ENCODE measurements at regions of chr7 and their contacts with region 1.

Region 1: GRCh38 chr7:151351027-151351426 is 9.4 kb downstream of the NUB1 start:
- DNase-seq: peak in 2 of 9 donors; percentile 7 to 45
- ATAC-seq: no peak
- H3K4me3 ChIP-seq: no peak overlapping the region
- H3K4me3 Mint-ChIP-seq: peak overlapping the region; percentile 56 to 86 (median 72)
- H3K27ac ChIP-seq: peak overlapping the region; percentile 89
- H3K27ac Mint-ChIP-seq: peak overlapping the region; percentile 74 to 100 (median 93)
- H3K4me1 ChIP-seq: peaks cover 28 to 35% of the 10 kb centered on the region in 2 donors
- H3K4me1 Mint-ChIP-seq: peaks cover 19 to 74% (median 69%) of the 10 kb centered on the region in 7 donors
- H3K27me3 ChIP-seq: no peaks in the 10 kb centered on the region
- H3K27me3 Mint-ChIP-seq: no peaks in the 10 kb centered on the region

Region 2: GRCh38 chr7:149714050-149714909 is 1636.7 kb before region 1 on chr7:
- CTCF ChIA-PET with region 1: no interaction called
- POLR2A ChIA-PET with region 1: no interaction called
- intact Hi-C with region 1: loop called in 1 of 2 experiments (anchors 10 kb)
- DNase-seq: peak; percentile 68 to 89 (median 84)
- ATAC-seq: peak; percentile 99
- H3K4me3 ChIP-seq: peak overlapping the region; percentile 75
- H3K4me3 Mint-ChIP-seq: peak overlapping the region; percentile 71 to 87 (median 80)
- H3K27ac ChIP-seq: peak overlapping the region; percentile 72
- H3K27ac Mint-ChIP-seq: peak overlapping the region in 4 of 9 donors; percentile 5 to 72 (median 54)
- H3K4me1 ChIP-seq: peaks cover 10 to 13% of the 10 kb centered on the region in 2 donors
- H3K4me1 Mint-ChIP-seq: peaks cover 12 to 26% (median 19%) of the 10 kb centered on the region in 7 donors
- H3K27me3 ChIP-seq: no peaks in the 10 kb centered on the region
- H3K27me3 Mint-ChIP-seq: peaks cover 0 to 4% (median 0%) of the 10 kb centered on the region in 5 donors

Region 3: DNA sequence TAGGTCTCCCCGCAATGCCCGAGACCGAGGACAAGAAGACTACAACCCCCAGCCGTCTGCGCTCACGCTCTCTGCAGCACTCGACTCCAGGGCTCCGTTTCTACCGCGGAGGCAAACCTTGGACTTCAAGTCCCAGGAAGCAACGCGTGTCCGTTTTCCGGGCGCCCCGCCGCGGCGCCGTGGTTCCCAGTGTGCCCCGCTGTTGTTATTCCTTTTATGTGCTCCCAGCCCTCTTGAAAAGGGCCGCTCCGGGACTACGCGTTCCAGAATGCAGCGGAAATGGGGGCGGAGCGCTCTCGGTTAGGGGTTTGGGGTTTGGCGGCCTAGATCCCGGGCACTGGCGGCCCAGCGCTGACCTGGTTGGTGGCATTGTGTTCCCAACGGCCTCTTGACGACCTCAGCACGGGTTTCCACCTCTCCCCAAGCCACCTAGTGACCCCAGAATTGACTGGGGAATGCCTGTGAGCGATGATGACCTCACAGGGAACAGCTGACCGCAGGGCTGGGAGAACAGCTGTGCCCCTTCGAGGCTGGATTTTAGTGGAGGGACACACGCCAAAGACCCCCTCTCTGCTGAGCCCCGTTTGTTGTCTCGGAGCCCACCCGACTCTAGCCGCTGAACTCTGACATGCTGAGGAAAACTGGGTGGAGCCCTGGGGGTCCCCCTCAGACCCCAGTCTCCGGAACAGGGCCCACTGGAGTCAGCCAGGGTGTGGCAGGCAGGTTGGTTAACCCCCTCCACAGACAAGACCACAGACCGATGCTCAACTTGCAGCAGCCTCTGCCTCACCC is 292.8 kb before region 1 on chr7:
- CTCF ChIA-PET with region 1: no interaction called
- POLR2A ChIA-PET with region 1: no interaction called
- intact Hi-C with region 1: loop called in 1 of 2 experiments (anchors 5 kb)
- DNase-seq: peak; percentile 80 to 99 (median 97)
- ATAC-seq: peak; percentile 96
- H3K4me3 ChIP-seq: peak overlapping the region; percentile 78
- H3K4me3 Mint-ChIP-seq: peak overlapping the region; percentile 91 to 99 (median 94)
- H3K27ac ChIP-seq: peak overlapping the region; percentile 92
- H3K27ac Mint-ChIP-seq: peak overlapping the region; percentile 86 to 96 (median 93)
- H3K4me1 ChIP-seq: peaks cover 25 to 32% of the 10 kb centered on the region in 2 donors
- H3K4me1 Mint-ChIP-seq: peaks cover 25 to 41% (median 38%) of the 10 kb centered on the region in 7 donors
- H3K27me3 ChIP-seq: no peaks in the 10 kb centered on the region
- H3K27me3 Mint-ChIP-seq: no peaks in the 10 kb centered on the region

Region 4: GRCh38 chr7:151276666-151277590 is 74.1 kb before region 1 on chr7:
- CTCF ChIA-PET with region 1: no interaction called
- POLR2A ChIA-PET with region 1: no interaction called
- intact Hi-C with region 1: loop called in 1 of 2 experiments (anchors 2 kb)
- DNase-seq: peak; percentile 32 to 64 (median 55)
- ATAC-seq: peak; percentile 77
- H3K4me3 ChIP-seq: peak overlapping the region; percentile 53
- H3K4me3 Mint-ChIP-seq: peak overlapping the region; percentile 69 to 88 (median 85)
- H3K27ac ChIP-seq: peak overlapping the region; percentile 0
- H3K27ac Mint-ChIP-seq: peak overlapping the region in 8 of 9 donors; percentile 38 to 90 (median 62)
- H3K4me1 ChIP-seq: peaks cover 13 to 20% of the 10 kb centered on the region in 2 donors
- H3K4me1 Mint-ChIP-seq: peaks cover 23 to 39% (median 32%) of the 10 kb centered on the region in 7 donors
- H3K27me3 ChIP-seq: no peaks in the 10 kb centered on the region
- H3K27me3 Mint-ChIP-seq: peaks cover 0 to 32% (median 8%) of the 10 kb centered on the region in 5 donors

Region 5: DNA sequence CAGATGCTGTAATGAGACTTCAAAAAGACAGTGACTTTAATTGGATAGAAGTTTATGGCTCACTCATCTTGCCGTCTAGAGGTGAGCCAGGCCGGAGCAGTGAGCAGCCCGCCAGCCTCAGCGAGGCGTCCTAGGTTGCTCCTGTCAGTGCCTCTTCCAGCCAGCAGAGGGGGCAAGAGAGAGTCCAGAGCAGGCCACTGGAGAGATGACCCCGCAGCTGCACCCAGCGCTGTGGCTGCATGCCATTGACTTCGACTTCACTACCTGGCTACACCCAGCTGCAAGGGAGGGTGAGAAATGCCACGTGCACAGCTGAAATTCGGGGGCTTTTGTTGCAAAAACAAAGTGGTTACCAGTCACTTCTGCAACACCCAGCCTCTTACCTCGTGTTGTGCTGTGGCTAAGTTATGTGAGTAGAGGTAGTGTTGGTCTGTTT is 17.1 kb after region 1 on chr7:
- CTCF ChIA-PET with region 1: interaction called, 3 read pairs
- POLR2A ChIA-PET with region 1: interaction called, 5 read pairs
- intact Hi-C with region 1: loop called in 1 of 2 experiments (anchors 2 kb)
- DNase-seq: peak; percentile 55 to 80 (median 69)
- ATAC-seq: peak; percentile 99
- H3K4me3 ChIP-seq: no peak overlapping the region
- H3K4me3 Mint-ChIP-seq: no peak overlapping the region
- H3K27ac ChIP-seq: no peak overlapping the region
- H3K27ac Mint-ChIP-seq: peak overlapping the region in 2 of 9 donors; percentile 46 to 56
- H3K4me1 ChIP-seq: peaks cover 0 to 4% of the 10 kb centered on the region in 2 donors
- H3K4me1 Mint-ChIP-seq: peaks cover 3 to 29% (median 12%) of the 10 kb centered on the region in 7 donors
- H3K27me3 ChIP-seq: no peaks in the 10 kb centered on the region
- H3K27me3 Mint-ChIP-seq: no peaks in the 10 kb centered on the region

Region 6: DNA sequence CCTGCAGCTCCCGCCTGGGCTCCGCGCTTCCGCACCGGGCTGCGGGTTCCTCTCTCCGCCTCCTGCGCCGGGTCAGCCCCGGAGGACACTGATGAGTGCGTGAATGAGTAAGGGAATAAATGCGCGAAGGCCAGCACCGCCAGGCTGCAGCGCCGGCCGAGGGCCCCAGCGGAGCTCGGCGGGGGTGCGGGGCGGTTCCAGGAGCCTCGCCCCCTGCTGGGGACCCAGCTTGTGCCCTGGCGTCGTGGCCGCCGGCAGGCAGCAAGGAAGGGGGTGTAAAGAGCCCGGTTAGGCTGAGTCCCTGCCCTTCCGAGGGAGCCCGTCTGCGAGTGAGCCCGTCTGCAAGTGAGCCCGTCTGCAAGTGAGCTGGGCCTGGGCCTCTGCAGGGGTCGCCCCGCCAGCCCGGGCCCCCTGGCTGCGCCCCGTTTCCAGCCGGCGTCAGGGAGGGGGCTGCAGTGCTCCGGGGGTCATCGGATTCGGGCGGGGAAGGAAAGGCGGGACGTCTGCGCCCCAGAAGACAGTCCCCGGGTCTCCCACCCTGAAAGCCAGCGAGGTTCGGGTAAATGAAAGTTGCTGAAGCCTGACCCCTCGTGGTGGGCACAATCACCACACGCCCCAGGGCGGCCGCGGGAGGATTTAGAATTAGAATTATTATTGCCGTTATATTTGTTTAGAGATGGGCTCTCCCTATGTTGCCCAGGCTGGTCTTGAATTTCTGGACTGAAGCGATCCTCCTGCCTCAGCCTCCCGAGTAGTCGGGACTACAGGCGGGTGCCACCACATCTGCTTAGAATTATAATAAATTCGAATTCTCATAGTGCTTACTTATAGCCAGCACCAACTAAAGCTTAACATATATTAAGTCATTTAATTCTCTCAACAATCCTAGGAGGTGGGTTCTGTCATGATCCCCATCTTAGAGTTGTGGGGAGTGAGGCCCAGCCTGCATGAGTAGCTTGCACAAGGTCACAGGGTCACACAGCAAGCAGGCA is 97.5 kb after region 1 on chr7:
- CTCF ChIA-PET with region 1: interaction called, 29 read pairs
- POLR2A ChIA-PET with region 1: interaction called, 4 read pairs
- intact Hi-C with region 1: loop called (anchors 1 kb)
- DNase-seq: peak; percentile 67 to 87 (median 83)
- ATAC-seq: peak; percentile 92
- H3K4me3 ChIP-seq: peak overlapping the region; percentile 68
- H3K4me3 Mint-ChIP-seq: peak overlapping the region; percentile 69 to 88 (median 80)
- H3K27ac ChIP-seq: peak overlapping the region; percentile 64
- H3K27ac Mint-ChIP-seq: peak overlapping the region in 6 of 9 donors; percentile 28 to 88 (median 42)
- H3K4me1 ChIP-seq: peaks cover 0 to 3% of the 10 kb centered on the region in 2 donors
- H3K4me1 Mint-ChIP-seq: peaks cover 0 to 32% (median 8%) of the 10 kb centered on the region in 7 donors
- H3K27me3 ChIP-seq: no peaks in the 10 kb centered on the region
- H3K27me3 Mint-ChIP-seq: peaks cover 0 to 23% (median 4%) of the 10 kb centered on the region in 5 donors

Region 7: DNA sequence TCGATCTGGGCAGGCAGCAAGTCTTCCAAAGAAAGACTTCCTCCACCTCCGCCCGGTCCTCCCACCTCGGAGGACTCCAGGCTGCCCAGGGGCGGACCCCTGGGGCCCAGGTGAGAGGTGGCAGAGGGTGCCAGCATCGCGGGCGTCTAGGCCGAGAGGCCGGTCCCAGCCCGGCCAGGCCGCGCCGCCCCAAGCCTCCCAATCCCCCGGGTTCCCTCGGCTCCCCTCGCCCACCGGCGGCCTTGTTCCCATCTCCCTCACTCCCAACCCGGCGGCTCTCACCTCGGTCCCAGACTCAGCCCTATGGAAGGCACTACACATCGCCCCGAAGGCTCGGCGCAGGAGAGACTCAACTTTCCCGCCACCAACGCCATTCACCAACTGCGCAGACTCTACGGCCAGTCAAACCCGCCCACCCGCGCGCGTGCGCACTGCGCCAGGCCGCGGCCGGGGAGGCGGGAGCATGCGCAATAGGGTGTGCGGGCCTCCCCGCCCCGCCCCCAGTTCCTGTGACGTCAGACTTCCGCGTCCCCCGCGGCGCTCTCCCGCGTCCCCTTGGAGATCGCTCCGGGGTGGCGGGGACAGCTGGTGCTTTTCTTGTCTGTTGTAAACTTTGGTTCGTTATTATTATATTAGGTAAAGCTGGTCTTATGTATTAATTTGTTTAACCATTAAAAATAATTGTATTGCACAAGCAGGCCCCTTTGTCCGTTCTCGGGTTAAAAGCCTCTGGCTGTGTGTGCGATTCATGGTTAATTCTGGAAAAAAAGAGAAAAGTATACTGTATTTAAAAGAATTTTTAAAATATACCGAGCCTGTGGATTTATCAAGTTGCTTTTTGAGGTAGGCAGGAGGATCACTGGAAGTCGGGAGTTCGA is 1325.0 kb after region 1 on chr7 and contains the start of gene XRCC2:
- CTCF ChIA-PET with region 1: no interaction called
- POLR2A ChIA-PET with region 1: no interaction called
- intact Hi-C with region 1: loop called in 1 of 2 experiments (anchors 5 kb)
- DNase-seq: peak; percentile 85 to 100 (median 97)
- ATAC-seq: peak; percentile 95
- H3K4me3 ChIP-seq: peak within 1 kb of the TSS; percentile 91
- H3K4me3 Mint-ChIP-seq: peak within 1 kb of the TSS; percentile 88 to 99 (median 94)
- H3K27ac ChIP-seq: peak within 1 kb of the TSS; percentile 87
- H3K27ac Mint-ChIP-seq: peak within 1 kb of the TSS; percentile 75 to 98 (median 91)
- H3K4me1 ChIP-seq: peaks cover 5 to 8% of the 10 kb centered on the region in 2 donors
- H3K4me1 Mint-ChIP-seq: peaks cover 9 to 22% (median 12%) of the 10 kb centered on the region in 7 donors
- H3K27me3 ChIP-seq: no peaks in the 10 kb centered on the region
- H3K27me3 Mint-ChIP-seq: no peaks in the 10 kb centered on the region
- total RNA-seq, gene XRCC2: 0.48 to 13.8 (median 1.2) TPM

Measured in naive thymus-derived CD4-positive, alpha-beta T cell (primary cell).